ENCODE measurements at regions of chr6 and their contacts with region 1.

Region 1: DNA sequence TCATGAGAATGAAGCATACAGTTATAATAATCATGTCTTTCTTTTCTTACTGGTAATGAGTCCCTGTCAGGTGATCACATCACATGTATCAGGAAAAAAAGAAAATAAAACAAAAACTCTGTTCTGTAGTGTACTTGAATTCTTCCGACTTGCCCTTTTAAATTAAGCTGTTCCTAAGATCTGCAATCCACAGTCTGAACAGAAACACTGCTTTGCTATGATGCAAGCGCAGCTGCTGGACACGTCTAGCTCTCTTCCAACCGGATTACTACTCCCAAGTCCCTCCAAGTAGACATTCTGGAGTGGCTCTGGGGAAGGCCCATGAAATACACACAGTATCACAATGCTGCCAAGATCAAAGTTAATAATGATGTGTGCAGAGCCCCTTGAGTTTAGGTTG is 83.7 kb downstream of the FYN start:
- DNase-seq: no peak
- H3K4me3 ChIP-seq: no peak overlapping the region
- CTCF ChIP-seq: no peak

Region 2: GRCh38 chr6:111777357-111777756 is 12.2 kb before region 1 on chr6:
- CTCF ChIA-PET with region 1: interaction called, 10 read pairs
- POLR2A ChIA-PET with region 1: no interaction called
- DNase-seq: no peak
- H3K4me3 ChIP-seq: no peak overlapping the region
- CTCF ChIP-seq: peak; percentile 18

Region 3: DNA sequence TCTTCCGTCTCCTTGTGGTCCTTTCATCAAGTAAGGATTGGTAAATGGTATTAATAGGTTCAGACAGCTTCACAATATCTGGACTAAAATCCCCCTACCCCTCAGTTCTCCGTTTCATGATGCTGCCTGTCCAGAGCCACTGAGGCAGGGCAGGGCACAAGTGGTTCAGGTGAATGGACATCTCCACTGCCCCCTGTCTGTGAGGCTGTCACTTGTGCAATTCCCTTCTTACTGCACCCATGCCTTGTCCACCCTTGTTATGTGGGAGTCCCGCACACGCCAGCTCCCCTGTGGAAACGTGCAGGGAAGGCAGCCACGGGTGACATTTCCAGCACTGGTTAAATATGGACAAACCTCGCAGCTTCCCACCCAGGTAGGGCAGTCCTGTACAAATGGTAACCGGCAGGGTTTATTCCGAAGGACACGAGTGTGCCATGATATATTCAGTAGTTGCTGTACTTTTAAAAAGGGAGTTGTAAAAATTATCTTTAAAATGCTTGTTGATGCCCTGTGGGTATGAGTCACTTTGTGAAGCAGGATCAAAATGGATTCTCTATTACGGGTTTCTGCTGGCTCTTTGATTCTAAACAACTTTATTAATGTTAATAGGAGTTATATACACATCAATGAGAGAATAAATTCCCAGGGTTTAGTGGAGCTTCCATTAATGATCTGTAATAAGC is 10.1 kb after region 1 on chr6:
- CTCF ChIA-PET with region 1: interaction called, 10 read pairs
- POLR2A ChIA-PET with region 1: no interaction called
- DNase-seq: no peak
- H3K4me3 ChIP-seq: no peak overlapping the region
- CTCF ChIP-seq: no peak

Region 4: DNA sequence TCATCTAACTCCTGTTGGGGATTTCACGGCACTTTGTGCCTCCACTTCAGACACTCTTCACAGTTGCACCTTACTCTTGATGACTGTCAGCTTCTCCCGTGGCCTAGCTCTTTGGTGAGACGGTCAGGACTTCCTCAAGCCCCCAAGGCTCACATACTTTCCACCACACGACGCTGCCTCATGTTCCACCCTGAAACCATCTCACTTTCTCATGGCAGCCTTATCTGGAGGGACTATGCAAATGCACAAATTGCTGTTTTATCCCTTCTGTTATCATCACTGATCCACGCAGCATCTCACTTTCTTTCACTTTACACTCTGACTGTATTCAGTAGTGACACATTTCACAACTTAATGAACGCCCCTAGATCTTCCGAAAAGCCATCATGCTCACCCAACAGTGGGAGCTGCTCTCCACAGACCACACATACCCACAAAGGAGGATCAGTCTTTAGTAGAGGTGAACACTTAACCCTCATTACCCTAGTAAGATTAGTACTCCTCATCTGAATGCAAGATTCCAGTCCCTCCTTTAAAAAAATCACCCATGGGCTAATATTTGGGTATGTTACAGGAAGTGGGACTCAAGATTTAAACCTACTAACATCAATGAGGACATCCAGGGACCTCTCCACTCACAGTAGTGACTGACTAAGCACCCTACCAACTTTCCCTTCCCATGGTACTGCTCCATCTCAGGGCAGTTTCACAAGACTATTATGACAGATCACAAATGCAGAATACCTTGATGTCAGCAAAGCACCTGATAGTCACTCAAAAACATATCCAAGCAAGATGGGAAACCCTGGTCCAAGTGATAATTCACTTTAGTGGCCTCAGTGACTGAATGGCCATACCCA is 48.3 kb after region 1 on chr6:
- CTCF ChIA-PET with region 1: no interaction called
- POLR2A ChIA-PET with region 1: no interaction called
- DNase-seq: no peak
- H3K4me3 ChIP-seq: no peak overlapping the region
- CTCF ChIP-seq: no peak

Measured in AG04449 (cell line).